Dendritic cell treated with granulocyte-macrophage colony-stimulating factor and Interleukin-4, amounts not matched to agents 40 ng/mL and 50 ng/mL, for 4 days (primary cell): ENCODE measurements at regions of chrX and their contacts with region 1.

Region 1: GRCh38 chrX:147803948-147804347 is 107.8 kb upstream of the FMR1 start:
- H3K4me3 Mint-ChIP-seq: no peak overlapping the region
- H3K27ac Mint-ChIP-seq: no peak overlapping the region
- H3K4me1 Mint-ChIP-seq: peaks cover 7% of the 10 kb centered on the region
- H3K27me3 Mint-ChIP-seq: no peaks in the 10 kb centered on the region

Region 2: DNA sequence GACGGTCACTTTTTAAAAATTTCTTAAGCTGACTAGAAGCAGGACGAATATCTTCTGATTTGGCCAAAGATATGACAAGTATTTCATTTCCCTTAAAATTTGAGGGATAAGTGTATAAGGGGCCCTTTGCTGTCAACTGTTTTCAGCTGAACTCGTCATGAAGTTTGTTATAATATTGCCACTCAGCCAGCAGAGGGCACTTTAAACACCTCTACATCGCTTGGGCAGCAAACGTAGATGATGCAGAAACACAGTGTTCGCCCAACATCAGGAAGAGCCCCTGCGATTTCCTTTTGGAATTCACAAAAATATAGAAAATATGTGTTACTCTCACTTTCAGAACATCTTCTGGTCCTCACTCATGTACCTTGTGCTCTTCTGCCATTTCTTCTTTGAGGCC is 327.9 kb before region 1 on chrX:
- intact Hi-C with region 1: loop called (anchors 2 kb)
- H3K4me3 Mint-ChIP-seq: no peak overlapping the region
- H3K27ac Mint-ChIP-seq: no peak overlapping the region
- H3K4me1 Mint-ChIP-seq: no peaks in the 10 kb centered on the region
- H3K27me3 Mint-ChIP-seq: no peaks in the 10 kb centered on the region

Region 3: DNA sequence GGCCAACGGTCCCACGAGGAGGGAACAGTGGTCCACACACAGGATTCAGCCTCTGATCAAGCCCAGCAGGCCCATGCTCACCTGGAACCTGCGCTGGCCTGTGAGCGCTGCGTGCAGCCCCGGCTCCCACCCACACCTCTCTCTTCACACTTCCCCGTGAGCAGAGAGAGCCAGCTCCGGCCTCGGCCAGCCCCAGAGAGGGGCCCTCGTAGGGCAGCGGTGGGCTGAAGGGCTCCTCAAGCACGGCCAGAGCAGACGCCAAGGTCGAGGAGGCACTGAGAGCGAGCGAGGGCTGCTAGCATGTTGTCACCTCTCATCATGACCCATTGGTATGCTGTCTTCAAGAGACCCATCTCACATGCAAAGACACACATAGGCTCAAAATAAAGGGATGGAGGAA is 24.8 kb after region 1 on chrX:
- intact Hi-C with region 1: no loop called
- H3K4me3 Mint-ChIP-seq: no peak overlapping the region
- H3K27ac Mint-ChIP-seq: no peak overlapping the region
- H3K4me1 Mint-ChIP-seq: no peaks in the 10 kb centered on the region
- H3K27me3 Mint-ChIP-seq: peaks cover 1% of the 10 kb centered on the region

Region 4: DNA sequence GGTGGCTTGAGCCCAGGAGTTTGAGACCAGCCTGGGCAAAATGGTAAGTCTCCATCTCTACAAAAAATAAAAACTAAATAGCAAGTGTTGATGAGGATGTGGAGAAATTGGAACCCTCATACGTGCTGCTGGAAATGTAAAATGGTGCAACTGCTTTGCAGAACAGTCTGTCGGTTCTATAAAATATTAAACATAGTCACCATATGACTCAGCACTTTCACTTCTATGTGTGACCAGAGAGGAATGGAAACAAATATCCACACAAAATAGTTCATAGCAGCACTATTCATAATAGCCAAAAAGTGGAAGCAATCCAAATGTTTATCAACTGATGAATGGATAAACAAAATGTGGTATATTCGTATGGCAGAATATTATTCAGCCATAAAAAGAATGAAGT is 46.9 kb after region 1 on chrX:
- intact Hi-C with region 1: no loop called
- H3K4me3 Mint-ChIP-seq: no peak overlapping the region
- H3K27ac Mint-ChIP-seq: no peak overlapping the region
- H3K4me1 Mint-ChIP-seq: no peaks in the 10 kb centered on the region
- H3K27me3 Mint-ChIP-seq: peaks cover 4% of the 10 kb centered on the region